Colonic mucosa (tissue), 4 donors: ENCODE measurements at regions of chr1 and their contacts with region 1.

Region 1: GRCh38 chr1:176691251-176692228 is 228.6 kb downstream of the PAPPA2 start:
- DNase-seq: peak; percentile 48
- H3K4me3 ChIP-seq: no peak overlapping the region
- H3K27ac ChIP-seq: no peak overlapping the region
- H3K4me1 ChIP-seq: no peaks in the 10 kb centered on the region
- H3K27me3 ChIP-seq: no peaks in the 10 kb centered on the region
- CTCF ChIP-seq: peak; percentile 56

Region 2: DNA sequence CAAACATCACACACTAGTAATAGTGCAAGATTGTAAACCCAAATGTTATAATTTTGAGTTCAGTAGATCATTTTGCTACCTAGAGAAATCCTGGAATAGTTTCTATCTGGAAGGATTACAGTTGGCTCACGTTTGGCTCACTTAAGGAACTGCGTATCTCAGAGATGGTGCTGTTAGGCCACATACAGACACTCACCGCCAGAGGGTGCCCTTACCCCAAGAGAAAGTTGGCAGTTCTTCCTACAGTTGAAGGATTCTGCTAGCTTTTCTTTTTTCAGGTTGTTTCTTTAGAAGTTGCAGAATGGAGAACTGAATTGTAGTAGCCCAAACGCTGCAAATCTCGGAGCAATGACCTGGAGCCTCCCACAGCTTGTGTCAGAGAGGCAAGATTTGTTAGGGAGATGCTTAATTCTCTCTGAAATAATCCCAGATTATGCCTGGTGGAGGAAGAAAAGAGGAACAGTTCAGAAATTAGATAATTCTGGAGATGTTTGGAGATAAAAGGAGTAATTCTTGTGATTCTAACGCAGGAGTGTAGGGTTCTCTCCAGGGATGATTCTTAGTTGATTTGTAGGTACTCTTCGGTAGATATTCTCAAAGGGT is 316.5 kb before region 1 on chr1:
- intact Hi-C with region 1: loop called (anchors 5 kb)
- DNase-seq: peak; percentile 73
- H3K4me3 ChIP-seq: no peak overlapping the region
- H3K27ac ChIP-seq: no peak overlapping the region
- H3K4me1 ChIP-seq: no peaks in the 10 kb centered on the region
- H3K27me3 ChIP-seq: no peaks in the 10 kb centered on the region
- CTCF ChIP-seq: peak; percentile 82

Region 3: DNA sequence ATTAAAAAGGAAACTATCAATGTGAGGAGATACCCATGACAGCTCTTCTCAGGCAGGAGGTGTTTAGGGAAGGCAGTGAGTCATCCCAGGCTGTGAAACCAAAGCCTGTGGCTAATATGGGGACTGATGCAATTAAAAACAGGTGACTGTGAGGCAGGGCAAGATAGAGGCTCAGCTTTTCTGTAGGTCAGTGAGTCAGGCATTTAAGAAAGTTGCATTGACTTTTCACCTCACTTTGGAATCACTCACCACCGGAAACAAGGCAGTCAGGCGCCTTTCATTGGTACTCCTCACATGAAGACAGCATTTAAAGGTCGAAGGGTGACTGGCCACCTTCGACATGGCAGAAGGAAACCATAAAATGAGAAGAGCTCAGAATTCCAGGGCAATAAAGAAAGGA is 174.1 kb before region 1 on chr1:
- intact Hi-C with region 1: no loop called
- DNase-seq: no peak
- H3K4me3 ChIP-seq: no peak overlapping the region
- H3K27ac ChIP-seq: no peak overlapping the region
- H3K4me1 ChIP-seq: no peaks in the 10 kb centered on the region
- H3K27me3 ChIP-seq: no peaks in the 10 kb centered on the region
- CTCF ChIP-seq: no peak

Region 4: GRCh38 chr1:176559878-176560277 is 131.7 kb before region 1 on chr1:
- intact Hi-C with region 1: loop called (anchors 5 kb)
- DNase-seq: peak; percentile 42
- H3K4me3 ChIP-seq: no peak overlapping the region
- H3K27ac ChIP-seq: no peak overlapping the region
- H3K4me1 ChIP-seq: no peaks in the 10 kb centered on the region
- H3K27me3 ChIP-seq: no peaks in the 10 kb centered on the region
- CTCF ChIP-seq: peak; percentile 72

Region 5: GRCh38 chr1:176826263-176826662 is 134.7 kb after region 1 on chr1:
- intact Hi-C with region 1: no loop called
- DNase-seq: no peak
- H3K4me3 ChIP-seq: no peak overlapping the region
- H3K27ac ChIP-seq: no peak overlapping the region
- H3K4me1 ChIP-seq: no peaks in the 10 kb centered on the region
- H3K27me3 ChIP-seq: no peaks in the 10 kb centered on the region
- CTCF ChIP-seq: no peak